Mammary epithelial cell (primary cell): ENCODE measurements at regions of chr1 and their contacts with region 1.

Region 1: DNA sequence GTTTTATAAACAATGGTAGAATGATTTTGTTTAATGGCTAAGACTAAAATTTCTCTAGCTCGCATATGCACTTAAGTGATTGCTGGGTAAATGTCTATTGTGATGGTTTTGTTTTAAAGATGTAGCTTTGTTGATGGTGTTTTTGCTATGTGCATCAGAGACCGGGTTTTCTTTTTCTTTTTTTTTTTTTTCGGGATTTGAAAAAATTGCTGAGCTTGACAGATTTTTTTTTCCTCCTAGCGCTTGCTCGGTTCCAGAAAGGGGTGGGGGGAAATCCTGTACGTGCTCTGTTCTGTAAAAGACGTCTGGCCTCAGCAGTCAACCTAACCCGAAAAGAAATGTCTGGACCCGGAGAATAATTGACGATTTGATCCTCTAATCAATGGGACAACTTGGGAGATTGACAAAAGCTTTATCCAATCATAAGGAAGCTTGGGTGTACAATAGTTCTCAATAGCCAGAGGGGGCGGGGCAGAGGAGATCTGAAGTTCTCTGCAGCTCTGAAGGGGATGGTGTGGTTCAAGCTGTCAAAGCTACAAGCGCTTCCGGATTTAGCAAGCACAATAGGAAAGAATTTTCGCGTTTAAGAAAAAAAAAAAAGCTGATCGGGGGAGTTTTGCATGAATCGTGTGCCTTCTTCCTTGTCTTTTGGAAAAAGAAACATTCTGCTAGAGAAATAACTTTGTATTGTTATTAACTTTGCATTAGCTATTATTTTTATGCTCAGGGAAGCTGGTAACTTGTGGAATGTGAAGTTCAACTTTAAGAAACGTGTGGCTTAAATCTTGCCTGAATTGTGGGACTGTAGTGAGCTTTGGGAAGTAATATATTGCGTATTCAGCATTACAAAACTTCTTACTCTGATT is 4.5 kb upstream of the NFIA start:
- DNase-seq: peak; percentile 100
- H3K4me3 ChIP-seq: peak overlapping the region; percentile 63 to 92 (median 81)
- H3K27ac ChIP-seq: peak overlapping the region; percentile 64
- H3K4me1 ChIP-seq: peaks cover 33% of the 10 kb centered on the region
- H3K27me3 ChIP-seq: no peaks in the 10 kb centered on the region
- CTCF ChIP-seq: no peak

Region 2: DNA sequence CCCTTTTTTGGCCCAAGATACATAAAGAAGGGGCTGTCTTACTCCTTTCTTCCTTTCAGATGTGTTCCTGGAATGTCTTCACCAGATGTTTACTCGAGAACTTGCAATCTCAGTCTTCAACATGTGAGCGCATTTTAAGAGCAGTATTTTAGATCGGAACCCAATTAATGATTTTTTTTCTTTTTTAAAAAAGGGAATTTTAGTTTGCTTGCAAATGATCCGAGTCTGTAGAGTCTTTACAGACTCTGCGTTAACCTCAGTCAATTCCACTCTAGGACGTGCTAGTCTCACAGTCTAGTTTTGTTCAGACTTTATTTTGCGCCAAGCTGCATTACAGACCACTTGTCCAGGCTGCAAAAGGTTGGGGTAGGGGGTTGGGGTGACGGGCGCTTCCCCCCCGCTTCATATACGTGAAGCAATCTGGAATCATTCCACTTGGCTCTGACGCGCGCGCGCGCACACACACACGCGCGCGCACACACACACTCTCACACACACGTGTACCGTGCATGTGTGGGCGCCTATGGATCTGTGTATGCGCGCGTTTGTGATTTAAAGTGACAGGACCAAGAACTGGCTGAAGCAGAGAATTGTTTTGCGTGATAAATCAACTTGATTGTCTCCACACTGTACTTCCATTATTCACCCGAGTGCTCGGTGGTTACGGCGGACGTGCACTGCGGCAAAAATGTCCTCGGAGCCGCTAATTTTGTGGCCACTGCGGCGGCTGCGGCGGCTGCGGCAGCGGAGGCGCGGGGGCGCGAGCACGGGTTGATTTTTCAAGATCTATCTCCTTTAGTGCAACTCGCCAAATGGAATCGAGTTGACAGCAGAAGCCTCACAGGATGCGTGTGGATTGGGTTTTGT is 21.1 kb before region 1 on chr1:
- CTCF ChIA-PET with region 1: interaction called, 4 read pairs
- dilution Hi-C with region 1: no loop called
- in situ Hi-C with region 1: no loop called
- intact Hi-C with region 1: loop called (anchors 1 kb)
- DNase-seq: peak; percentile 53
- H3K4me3 ChIP-seq: peak overlapping the region; percentile 57 to 72 (median 72)
- H3K27ac ChIP-seq: peak overlapping the region; percentile 45
- H3K4me1 ChIP-seq: peaks cover 12% of the 10 kb centered on the region
- H3K27me3 ChIP-seq: no peaks in the 10 kb centered on the region
- CTCF ChIP-seq: no peak

Region 3: DNA sequence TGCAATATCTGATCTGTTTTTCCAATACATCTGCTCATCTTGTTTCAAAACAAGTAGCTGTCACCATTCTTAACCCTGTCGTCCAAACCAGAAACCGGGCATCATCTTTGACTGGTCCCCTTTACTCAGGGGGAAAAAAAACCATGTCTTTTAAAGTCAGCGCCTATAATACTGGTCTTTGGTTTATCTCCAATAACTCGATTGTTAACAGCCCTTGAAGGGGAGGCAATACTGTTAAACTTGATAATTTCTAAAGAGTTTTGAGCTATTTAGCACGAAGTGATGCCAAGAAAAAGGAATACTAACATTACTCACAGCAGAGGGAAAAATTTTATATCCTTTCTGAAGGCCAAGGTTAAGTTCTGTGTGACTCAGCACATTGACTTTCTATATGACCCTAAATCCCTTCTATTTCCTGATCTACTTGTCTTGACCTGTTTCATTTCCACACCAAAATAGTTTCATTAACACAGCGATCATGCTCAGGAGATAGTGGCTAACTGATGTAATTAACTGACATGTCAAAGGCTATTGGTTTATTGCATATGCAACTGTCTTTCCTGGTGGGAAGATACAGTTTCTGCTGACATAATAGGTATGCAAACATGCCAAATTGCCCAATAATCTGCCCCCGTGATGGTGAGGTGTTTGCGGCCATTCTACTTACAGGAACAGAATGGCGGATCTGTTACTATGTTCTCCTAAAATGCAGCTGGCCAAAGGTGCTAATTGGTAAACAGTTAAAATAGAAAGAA is 63.6 kb after region 1 on chr1:
- CTCF ChIA-PET with region 1: no interaction called
- dilution Hi-C with region 1: no loop called
- in situ Hi-C with region 1: no loop called
- intact Hi-C with region 1: loop called (anchors 2 kb)
- DNase-seq: peak; percentile 94
- H3K4me3 ChIP-seq: no peak overlapping the region
- H3K27ac ChIP-seq: peak overlapping the region; percentile 77
- H3K4me1 ChIP-seq: peaks cover 42% of the 10 kb centered on the region
- H3K27me3 ChIP-seq: no peaks in the 10 kb centered on the region
- CTCF ChIP-seq: no peak

Region 4: DNA sequence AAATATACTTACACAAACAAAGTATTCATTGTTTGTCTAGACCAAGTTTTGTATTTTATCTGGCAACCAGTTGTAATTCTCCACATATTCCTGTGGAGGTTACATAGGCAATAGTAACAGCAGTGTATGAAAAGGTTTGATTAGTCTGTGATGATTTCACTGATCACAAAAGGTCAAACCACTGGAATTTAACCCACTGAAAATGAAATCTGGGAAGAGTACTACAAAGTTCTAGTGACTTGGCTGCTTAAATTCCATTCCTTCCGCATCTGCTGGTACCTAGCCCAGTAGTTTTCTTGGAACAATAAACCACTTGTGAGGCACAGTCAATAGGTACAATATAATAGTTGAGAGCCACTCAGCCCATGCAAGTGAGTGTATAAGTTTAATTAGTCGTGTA is 209.8 kb after region 1 on chr1:
- CTCF ChIA-PET with region 1: no interaction called
- dilution Hi-C with region 1: no loop called
- in situ Hi-C with region 1: no loop called
- intact Hi-C with region 1: loop called (anchors 2 kb)
- DNase-seq: peak; percentile 95
- H3K4me3 ChIP-seq: no peak overlapping the region
- H3K27ac ChIP-seq: peak overlapping the region; percentile 96
- H3K4me1 ChIP-seq: peaks cover 41% of the 10 kb centered on the region
- H3K27me3 ChIP-seq: no peaks in the 10 kb centered on the region
- CTCF ChIP-seq: peak in 1 of 2 donors; percentile 5